ENCODE measurements at regions of chr18 and their contacts with region 1.

Region 1: GRCh38 chr18:62979009-62979575 is 263.8 kb downstream of the PHLPP1 start:
- DNase-seq: peak; percentile 76
- ATAC-seq: peak; percentile 58
- H3K4me3 ChIP-seq: no peak overlapping the region
- H3K27ac ChIP-seq: no peak overlapping the region
- H3K4me1 ChIP-seq: no peaks in the 10 kb centered on the region
- H3K27me3 ChIP-seq: no peaks in the 10 kb centered on the region
- CTCF ChIP-seq: no peak

Region 2: DNA sequence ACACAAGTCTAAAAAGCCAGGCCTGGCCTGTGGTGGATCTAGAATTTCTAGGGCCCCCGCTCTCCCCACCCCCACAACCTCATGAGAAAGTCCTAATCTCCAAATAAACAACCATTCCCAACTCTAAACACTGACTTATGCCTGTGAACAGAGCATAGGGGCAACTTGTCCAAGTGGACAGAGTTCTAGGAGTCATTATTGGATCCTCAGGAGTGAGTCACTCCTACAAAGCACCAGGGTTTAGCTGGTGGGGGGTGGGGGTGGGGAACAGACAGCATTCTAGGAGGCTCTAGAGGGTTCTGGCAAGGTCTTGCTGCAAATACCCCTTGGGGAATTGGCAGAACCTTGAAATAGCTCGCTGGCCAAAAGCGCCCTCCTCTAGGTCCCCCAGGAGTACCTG is 373.0 kb before region 1 on chr18:
- intact Hi-C with region 1: loop called (anchors 10 kb)
- DNase-seq: no peak
- ATAC-seq: no peak
- H3K4me3 ChIP-seq: no peak overlapping the region
- H3K27ac ChIP-seq: no peak overlapping the region
- H3K4me1 ChIP-seq: peaks cover 5% of the 10 kb centered on the region
- H3K27me3 ChIP-seq: peaks cover 1% of the 10 kb centered on the region
- CTCF ChIP-seq: no peak

Region 3: DNA sequence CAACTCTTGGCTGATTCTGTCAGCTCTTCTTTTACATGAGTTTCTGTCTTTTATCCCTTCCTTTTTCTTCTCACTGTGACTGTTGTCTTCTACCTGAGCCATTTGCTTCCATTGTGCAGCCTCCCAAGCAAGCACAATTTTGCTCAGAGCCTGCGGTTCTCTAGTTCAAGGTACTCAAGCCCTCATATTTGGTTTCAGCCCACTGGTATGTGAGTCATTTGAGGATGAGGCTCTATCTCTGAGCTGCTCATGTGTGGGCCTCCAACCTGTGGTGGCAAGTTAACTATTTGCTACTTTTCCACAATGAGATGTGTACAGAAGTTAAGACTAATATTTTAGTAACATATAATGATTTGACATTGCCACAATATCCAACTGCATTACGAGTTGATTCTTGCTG is 80.7 kb before region 1 on chr18:
- intact Hi-C with region 1: no loop called
- DNase-seq: no peak
- ATAC-seq: no peak
- H3K4me3 ChIP-seq: no peak overlapping the region
- H3K27ac ChIP-seq: no peak overlapping the region
- H3K4me1 ChIP-seq: no peaks in the 10 kb centered on the region
- H3K27me3 ChIP-seq: no peaks in the 10 kb centered on the region
- CTCF ChIP-seq: no peak

Region 4: DNA sequence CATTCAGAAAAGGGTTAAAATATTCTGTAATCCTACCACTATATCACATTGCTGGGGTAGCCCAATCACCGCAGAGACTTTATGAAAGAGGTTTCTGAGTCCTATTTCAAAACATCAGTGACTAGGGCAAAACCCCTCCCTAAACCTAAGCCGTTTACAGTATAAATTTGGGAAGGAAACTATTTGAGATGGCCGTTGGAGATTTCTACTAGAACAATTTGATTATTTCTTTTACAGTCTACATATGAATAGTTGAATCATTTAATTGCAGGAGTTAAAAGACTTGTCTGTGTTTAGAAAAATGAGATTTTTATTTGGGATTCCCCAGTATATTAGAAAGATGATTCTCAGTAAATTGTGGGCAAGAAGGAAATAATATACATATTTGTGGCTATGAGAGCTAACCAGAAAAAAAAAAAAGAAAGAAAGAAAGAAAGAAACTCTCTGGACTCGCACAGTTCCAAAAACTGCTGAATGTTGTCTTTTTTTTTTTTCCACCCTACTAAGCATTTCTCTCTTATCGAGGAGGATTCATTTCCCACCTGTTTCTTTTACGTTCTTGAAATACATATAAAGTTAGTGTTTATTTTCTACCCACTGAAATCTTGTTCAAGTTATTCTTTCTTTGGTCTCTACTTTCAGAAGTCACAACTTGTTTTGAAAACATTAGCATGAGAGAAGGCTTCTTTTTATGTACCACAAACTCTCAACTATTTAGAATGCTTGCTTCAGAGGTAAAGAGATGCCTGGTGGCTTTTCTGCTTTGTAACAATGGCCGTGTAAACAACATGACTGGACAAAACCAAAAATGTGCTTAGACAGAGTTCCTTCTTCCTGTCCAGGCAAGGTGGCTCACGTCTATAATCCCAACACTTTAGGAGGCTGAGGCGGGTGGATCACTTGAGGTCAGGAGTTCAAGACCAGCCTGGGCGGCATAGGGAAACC is 274.6 kb after region 1 on chr18:
- intact Hi-C with region 1: no loop called
- DNase-seq: no peak
- ATAC-seq: peak; percentile 73
- H3K4me3 ChIP-seq: no peak overlapping the region
- H3K27ac ChIP-seq: peak overlapping the region; percentile 26
- H3K4me1 ChIP-seq: peaks cover 4% of the 10 kb centered on the region
- H3K27me3 ChIP-seq: no peaks in the 10 kb centered on the region
- CTCF ChIP-seq: no peak